Keratinocyte (primary cell): ENCODE measurements at regions of chr1 and their contacts with region 1.

Region 1: DNA sequence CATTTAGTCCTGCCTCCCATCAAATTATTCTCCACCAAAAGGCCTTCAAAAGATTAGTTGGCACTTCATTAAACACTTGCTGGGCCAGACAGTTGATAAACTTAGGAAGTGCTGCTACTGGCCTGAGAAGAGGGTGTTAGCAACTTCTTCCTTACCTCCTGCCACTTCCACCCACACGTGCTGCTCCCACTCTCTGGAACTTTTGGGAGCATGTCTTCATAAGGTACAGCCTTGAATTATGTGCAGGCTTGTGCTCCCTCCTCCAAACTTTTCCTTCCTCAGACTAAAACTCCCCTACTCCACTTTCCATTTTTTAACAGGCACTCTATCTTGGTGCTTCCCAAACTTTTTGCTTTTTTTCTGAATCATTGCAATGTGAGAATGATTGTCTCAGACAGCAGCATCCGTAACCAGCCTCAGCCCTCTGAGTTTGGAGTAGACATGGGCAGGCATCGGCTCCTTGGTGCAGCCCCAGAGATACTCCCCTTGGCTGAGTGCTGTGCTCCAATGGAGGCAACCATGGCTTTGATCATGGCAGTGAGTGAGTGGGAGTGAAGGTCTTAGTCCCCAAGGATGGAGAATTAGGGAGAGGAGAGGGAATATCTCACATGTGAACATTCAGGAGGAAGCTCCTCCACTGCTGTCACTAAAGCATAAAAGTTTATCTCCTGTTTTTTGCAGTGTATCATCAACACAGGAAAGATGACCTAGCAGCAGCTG is 8.7 kb upstream of the LELP1 start:
- DNase-seq: no peak
- H3K4me3 ChIP-seq: no peak overlapping the region
- H3K27ac ChIP-seq: no peak overlapping the region
- H3K4me1 ChIP-seq: peaks cover 2% of the 10 kb centered on the region
- H3K27me3 ChIP-seq: peaks cover 3% of the 10 kb centered on the region
- CTCF ChIP-seq: no peak

Region 2: DNA sequence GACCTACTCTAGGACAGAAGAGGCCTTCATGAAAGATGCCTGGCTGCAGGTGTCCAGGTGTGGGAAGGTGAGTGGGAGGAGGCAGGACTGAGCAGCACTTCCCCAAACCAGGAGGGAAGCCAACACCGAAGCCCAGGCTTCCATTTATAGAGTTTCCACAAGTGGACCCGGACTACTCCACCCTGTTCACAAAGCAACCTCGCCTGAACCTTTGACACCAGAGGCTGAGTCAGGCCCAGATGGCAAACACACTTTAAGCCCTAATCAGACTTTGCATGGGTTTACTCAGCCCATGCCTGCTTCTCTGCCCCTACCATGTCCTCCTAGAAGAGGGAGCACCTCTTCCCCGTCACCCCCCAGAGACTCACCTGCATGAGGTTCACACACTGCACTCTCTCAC is 36.9 kb after region 1 on chr1:
- dilution Hi-C with region 1: loop called (anchors 5 kb)
- DNase-seq: no peak
- H3K4me3 ChIP-seq: no peak overlapping the region
- H3K27ac ChIP-seq: no peak overlapping the region
- H3K4me1 ChIP-seq: no peaks in the 10 kb centered on the region
- H3K27me3 ChIP-seq: peaks cover 3% of the 10 kb centered on the region
- CTCF ChIP-seq: no peak

Region 3: DNA sequence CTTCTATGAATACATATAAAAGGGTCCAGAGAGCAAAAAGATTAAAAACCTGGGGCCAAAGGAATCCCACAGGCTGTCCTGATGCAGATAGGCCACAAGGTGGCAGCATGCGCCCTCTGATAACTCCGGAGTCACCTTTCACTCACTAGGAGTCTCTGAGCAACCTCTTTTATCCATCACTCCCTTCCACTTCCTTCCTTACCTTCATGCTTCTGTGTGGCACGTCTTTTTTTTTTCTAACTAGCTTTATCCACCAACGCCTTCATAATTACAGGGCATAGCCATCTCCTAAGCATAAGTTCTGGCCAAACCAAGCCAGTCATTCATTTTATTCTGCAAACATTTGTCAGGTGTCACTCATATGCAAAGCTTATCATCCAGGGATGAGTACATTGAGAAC is 158.0 kb after region 1 on chr1:
- dilution Hi-C with region 1: no loop called
- DNase-seq: no peak
- H3K4me3 ChIP-seq: no peak overlapping the region
- H3K27ac ChIP-seq: no peak overlapping the region
- H3K4me1 ChIP-seq: peaks cover 18% of the 10 kb centered on the region
- H3K27me3 ChIP-seq: peaks cover 3% of the 10 kb centered on the region
- CTCF ChIP-seq: peak; percentile 82 to 89 (median 87)